Natural killer cell (primary cell): ENCODE measurements at regions of chr16 and their contacts with region 1.

Region 1: GRCh38 chr16:4019371-4019791 is 96.9 kb downstream of the ADCY9 start:
- DNase-seq: peak in 1 of 2 donors; percentile 32
- ATAC-seq: peak; percentile 35 to 52 (median 46)
- H3K4me3 ChIP-seq: peak overlapping the region; percentile 31
- H3K4me3 Mint-ChIP-seq: peak overlapping the region; percentile 91
- H3K27ac ChIP-seq: peak overlapping the region; percentile 81
- H3K27ac Mint-ChIP-seq: peak overlapping the region; percentile 97 to 98
- H3K4me1 ChIP-seq: peaks cover 61% of the 10 kb centered on the region
- H3K4me1 Mint-ChIP-seq: peaks cover 59% of the 10 kb centered on the region in 2 donors
- H3K27me3 ChIP-seq: no peaks in the 10 kb centered on the region
- H3K27me3 Mint-ChIP-seq: no peaks in the 10 kb centered on the region
- CTCF ChIP-seq: no peak

Region 2: GRCh38 chr16:4032768-4033167 is 13.4 kb after region 1 on chr16:
- intact Hi-C with region 1: loop called (anchors 1 kb)
- DNase-seq: peak; percentile 46 to 56
- ATAC-seq: peak; percentile 88 to 91 (median 88)
- H3K4me3 ChIP-seq: no peak overlapping the region
- H3K4me3 Mint-ChIP-seq: peak overlapping the region; percentile 42
- H3K27ac ChIP-seq: peak overlapping the region; percentile 21
- H3K27ac Mint-ChIP-seq: peak overlapping the region; percentile 75 to 84
- H3K4me1 ChIP-seq: peaks cover 31% of the 10 kb centered on the region
- H3K4me1 Mint-ChIP-seq: peaks cover 34 to 44% of the 10 kb centered on the region in 2 donors
- H3K27me3 ChIP-seq: no peaks in the 10 kb centered on the region
- H3K27me3 Mint-ChIP-seq: no peaks in the 10 kb centered on the region
- CTCF ChIP-seq: no peak

Region 3: GRCh38 chr16:4116337-4117249 is 97.2 kb after region 1 on chr16 and contains the start of gene ADCY9:
- intact Hi-C with region 1: loop called (anchors 5 kb)
- DNase-seq: peak; percentile 80 to 93
- ATAC-seq: peak; percentile 77 to 92 (median 78)
- H3K4me3 ChIP-seq: peak within 1 kb of the TSS; percentile 56
- H3K4me3 Mint-ChIP-seq: peak within 1 kb of the TSS; percentile 88
- H3K27ac ChIP-seq: peak within 1 kb of the TSS; percentile 24
- H3K27ac Mint-ChIP-seq: peak within 1 kb of the TSS; percentile 71 to 88
- H3K4me1 ChIP-seq: peaks cover 41% of the 10 kb centered on the region
- H3K4me1 Mint-ChIP-seq: peaks cover 42 to 44% of the 10 kb centered on the region in 2 donors
- H3K27me3 ChIP-seq: no peaks in the 10 kb centered on the region
- H3K27me3 Mint-ChIP-seq: no peaks in the 10 kb centered on the region
- CTCF ChIP-seq: no peak
- total RNA-seq, gene ADCY9: 28.0 to 52.4 (median 38.3) TPM